Ovary (tissue), 10 donors: ENCODE measurements at regions of chr1 and their contacts with region 1.

Region 1: GRCh38 chr1:198088360-198089071 is 68.3 kb upstream of the NEK7 start:
- DNase-seq: no peak
- H3K4me3 ChIP-seq: no peak overlapping the region
- H3K27ac ChIP-seq: no peak overlapping the region
- H3K4me1 ChIP-seq: no peaks in the 10 kb centered on the region
- H3K27me3 ChIP-seq: no peaks in the 10 kb centered on the region
- CTCF ChIP-seq: peak in 2 of 3 donors; percentile 14 to 48
- EP300 ChIP-seq: no peak
- POLR2A ChIP-seq: no peak

Region 2: GRCh38 chr1:197937892-197938291 is 150.6 kb before region 1 on chr1:
- intact Hi-C with region 1: no loop called
- DNase-seq: no peak
- H3K4me3 ChIP-seq: no peak overlapping the region
- H3K27ac ChIP-seq: no peak overlapping the region
- H3K4me1 ChIP-seq: no peaks in the 10 kb centered on the region
- H3K27me3 ChIP-seq: no peaks in the 10 kb centered on the region
- CTCF ChIP-seq: no peak
- EP300 ChIP-seq: no peak
- POLR2A ChIP-seq: no peak

Region 3: GRCh38 chr1:198373376-198373775 is 284.9 kb after region 1 on chr1:
- intact Hi-C with region 1: loop called in 1 of 4 experiments (anchors 10 kb)
- DNase-seq: no peak
- H3K4me3 ChIP-seq: no peak overlapping the region
- H3K27ac ChIP-seq: no peak overlapping the region
- H3K4me1 ChIP-seq: no peaks in the 10 kb centered on the region
- H3K27me3 ChIP-seq: no peaks in the 10 kb centered on the region
- CTCF ChIP-seq: no peak
- EP300 ChIP-seq: no peak
- POLR2A ChIP-seq: no peak